ENCODE measurements at regions of chr11 and their contacts with region 1.

Region 1: GRCh38 chr11:6353367-6353987 is 33.2 kb upstream of the CAVIN3 start:
- DNase-seq: peak; percentile 68
- ATAC-seq: peak; percentile 65
- H3K4me3 Mint-ChIP-seq: no peak overlapping the region
- H3K27ac Mint-ChIP-seq: no peak overlapping the region
- H3K4me1 Mint-ChIP-seq: peaks cover 28% of the 10 kb centered on the region
- H3K27me3 Mint-ChIP-seq: no peaks in the 10 kb centered on the region
- CTCF ChIP-seq: peak; percentile 100

Region 2: DNA sequence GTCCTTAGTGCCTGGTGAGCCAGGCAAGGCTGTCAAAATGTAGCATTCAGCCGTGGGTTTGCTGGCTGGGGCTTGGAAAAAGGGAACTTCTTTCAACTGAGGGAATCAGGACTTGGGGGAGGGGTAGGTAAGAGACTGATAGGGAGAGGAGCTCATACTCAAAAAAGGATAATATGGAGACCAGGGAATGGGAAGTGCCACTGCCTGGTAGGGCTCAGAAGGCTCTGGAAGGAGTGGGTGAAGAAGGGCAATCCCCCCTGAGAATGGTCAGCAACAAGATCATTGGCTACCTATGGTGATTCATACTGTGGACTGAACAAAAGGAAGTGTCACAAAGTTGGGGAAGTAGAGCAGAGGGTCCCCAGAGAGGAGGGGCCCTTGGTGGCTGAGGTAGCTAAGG is 112.7 kb before region 1 on chr11:
- CTCF ChIA-PET with region 1: interaction called, 18 read pairs
- POLR2A ChIA-PET with region 1: no interaction called
- intact Hi-C with region 1: no loop called
- DNase-seq: no peak
- ATAC-seq: no peak
- H3K4me3 Mint-ChIP-seq: no peak overlapping the region
- H3K27ac Mint-ChIP-seq: no peak overlapping the region
- H3K4me1 Mint-ChIP-seq: no peaks in the 10 kb centered on the region
- H3K27me3 Mint-ChIP-seq: peaks cover 2% of the 10 kb centered on the region
- CTCF ChIP-seq: no peak

Region 3: DNA sequence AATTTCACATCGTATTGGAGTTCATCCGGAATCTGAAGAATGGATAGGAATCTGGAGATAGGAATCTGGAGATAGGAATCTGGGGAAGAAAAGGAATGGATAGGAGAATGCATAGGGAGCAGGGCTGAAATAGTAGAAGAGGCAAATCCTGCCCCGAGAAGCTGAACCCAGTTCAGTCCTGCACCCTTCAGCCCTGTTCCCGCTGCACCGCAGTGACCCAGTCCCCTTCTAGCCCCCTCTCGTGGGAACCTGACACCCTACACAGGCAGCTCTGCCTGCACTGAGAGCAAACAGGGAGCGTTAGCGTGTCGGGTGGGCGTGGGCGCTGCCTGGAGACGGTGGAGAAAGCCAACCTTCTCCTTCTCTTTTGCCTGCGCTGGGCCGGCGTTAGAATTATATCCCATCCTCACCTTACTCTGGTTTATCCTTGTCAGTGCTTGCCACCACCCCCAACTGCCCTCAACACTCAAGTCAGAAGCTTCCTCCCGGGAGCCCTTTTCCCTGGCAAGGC is 94.9 kb before region 1 on chr11:
- CTCF ChIA-PET with region 1: interaction called, 106 read pairs
- POLR2A ChIA-PET with region 1: no interaction called
- intact Hi-C with region 1: loop called (anchors 5 kb)
- DNase-seq: peak; percentile 23
- ATAC-seq: peak; percentile 32
- H3K4me3 Mint-ChIP-seq: peak overlapping the region; percentile 34
- H3K27ac Mint-ChIP-seq: no peak overlapping the region
- H3K4me1 Mint-ChIP-seq: no peaks in the 10 kb centered on the region
- H3K27me3 Mint-ChIP-seq: peaks cover 10% of the 10 kb centered on the region
- CTCF ChIP-seq: no peak

Region 4: GRCh38 chr11:6298605-6299004 is 54.9 kb before region 1 on chr11:
- CTCF ChIA-PET with region 1: interaction called, 21 read pairs
- POLR2A ChIA-PET with region 1: no interaction called
- intact Hi-C with region 1: loop called (anchors 5 kb)
- DNase-seq: peak; percentile 48
- ATAC-seq: peak; percentile 83
- H3K4me3 Mint-ChIP-seq: no peak overlapping the region
- H3K27ac Mint-ChIP-seq: no peak overlapping the region
- H3K4me1 Mint-ChIP-seq: no peaks in the 10 kb centered on the region
- H3K27me3 Mint-ChIP-seq: peaks cover 7% of the 10 kb centered on the region
- CTCF ChIP-seq: peak; percentile 35

Region 5: GRCh38 chr11:6315811-6316425 is 37.6 kb before region 1 on chr11:
- CTCF ChIA-PET with region 1: interaction called, 82 read pairs
- POLR2A ChIA-PET with region 1: interaction called, 3 read pairs
- intact Hi-C with region 1: loop called (anchors 1 kb)
- DNase-seq: peak; percentile 57
- ATAC-seq: peak; percentile 43
- H3K4me3 Mint-ChIP-seq: no peak overlapping the region
- H3K27ac Mint-ChIP-seq: no peak overlapping the region
- H3K4me1 Mint-ChIP-seq: peaks cover 20% of the 10 kb centered on the region
- H3K27me3 Mint-ChIP-seq: peaks cover 40% of the 10 kb centered on the region
- CTCF ChIP-seq: peak; percentile 76

Region 6: DNA sequence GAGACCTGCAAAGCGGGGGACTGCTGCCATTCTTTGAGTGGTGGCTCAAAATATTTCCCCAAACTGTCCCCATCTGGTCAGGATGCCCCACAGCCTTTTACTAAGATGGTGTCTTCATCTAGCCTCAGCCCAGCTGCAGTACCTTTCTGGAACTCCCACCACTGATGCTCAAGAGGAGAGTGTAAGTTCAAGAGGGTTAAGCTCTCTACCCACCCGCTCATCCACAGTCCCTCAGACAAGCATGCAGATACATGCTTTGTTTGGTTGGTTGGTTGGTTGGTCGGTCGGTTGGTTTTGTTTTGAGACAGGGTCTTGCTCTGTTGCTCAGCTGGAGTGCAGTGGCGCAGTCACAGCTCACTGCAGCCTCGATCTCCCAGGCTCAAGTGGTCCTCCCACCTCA is 18.7 kb before region 1 on chr11:
- CTCF ChIA-PET with region 1: interaction called, 28 read pairs
- POLR2A ChIA-PET with region 1: no interaction called
- intact Hi-C with region 1: no loop called
- DNase-seq: no peak
- ATAC-seq: no peak
- H3K4me3 Mint-ChIP-seq: no peak overlapping the region
- H3K27ac Mint-ChIP-seq: no peak overlapping the region
- H3K4me1 Mint-ChIP-seq: no peaks in the 10 kb centered on the region
- H3K27me3 Mint-ChIP-seq: peaks cover 8% of the 10 kb centered on the region
- CTCF ChIP-seq: no peak

Region 7: GRCh38 chr11:6389921-6390724 is 36.6 kb after region 1 on chr11 and contains the start of gene SMPD1:
- CTCF ChIA-PET with region 1: no interaction called
- POLR2A ChIA-PET with region 1: no interaction called
- intact Hi-C with region 1: no loop called
- DNase-seq: peak; percentile 95
- ATAC-seq: peak; percentile 83
- H3K4me3 Mint-ChIP-seq: peak within 1 kb of the TSS; percentile 79
- H3K27ac Mint-ChIP-seq: peak within 1 kb of the TSS; percentile 94
- H3K4me1 Mint-ChIP-seq: peaks cover 44% of the 10 kb centered on the region
- H3K27me3 Mint-ChIP-seq: no peaks in the 10 kb centered on the region
- CTCF ChIP-seq: no peak
- total RNA-seq, gene SMPD1: 10.6 to 11.2 TPM

Region 8: DNA sequence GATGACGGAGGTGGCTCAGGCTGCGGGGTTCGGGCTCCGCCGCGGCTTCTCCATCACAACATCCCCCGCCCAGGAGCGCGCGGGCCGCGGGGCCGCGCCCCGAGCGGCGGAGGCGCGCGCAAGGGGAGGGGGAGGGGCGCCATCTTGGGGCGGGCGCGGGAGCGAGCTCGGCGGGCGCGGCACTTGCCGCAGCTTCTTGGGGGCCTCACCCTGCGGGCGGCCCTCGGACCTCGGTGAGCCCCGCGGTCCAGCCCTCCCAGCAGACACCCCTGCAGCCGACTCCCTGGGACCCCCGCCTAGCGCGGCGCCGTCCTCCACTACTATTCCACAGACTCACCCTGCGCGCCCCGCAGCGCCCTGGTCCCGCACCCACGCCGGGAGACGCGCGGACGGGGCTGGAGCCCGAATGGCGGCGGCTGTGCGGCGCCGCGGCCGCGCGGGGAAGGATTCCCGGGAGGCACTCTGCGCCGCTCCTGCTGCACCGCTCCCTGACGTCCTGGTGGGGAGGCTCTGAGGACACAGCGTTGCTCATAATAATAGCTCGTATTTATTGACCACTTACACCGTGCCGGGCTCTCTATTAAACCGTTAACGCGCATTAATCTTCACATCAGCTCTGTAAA is 65.6 kb after region 1 on chr11 and contains the start of gene APBB1:
- CTCF ChIA-PET with region 1: no interaction called
- POLR2A ChIA-PET with region 1: no interaction called
- intact Hi-C with region 1: no loop called
- DNase-seq: peak; percentile 69
- ATAC-seq: peak; percentile 72
- H3K4me3 Mint-ChIP-seq: no peak within 1 kb of the TSS
- H3K27ac Mint-ChIP-seq: peak within 1 kb of the TSS; percentile 75
- H3K4me1 Mint-ChIP-seq: peaks cover 4% of the 10 kb centered on the region
- H3K27me3 Mint-ChIP-seq: peaks cover 8% of the 10 kb centered on the region
- CTCF ChIP-seq: no peak
- total RNA-seq, gene APBB1: 28.1 to 31.1 TPM

Measured in activated CD8-positive, alpha-beta T cell treated with anti-CD3 and anti-CD28 coated beads for 36 hours (primary cell).